ENCODE measurements at regions of chr6 and their contacts with region 1.

Region 1: DNA sequence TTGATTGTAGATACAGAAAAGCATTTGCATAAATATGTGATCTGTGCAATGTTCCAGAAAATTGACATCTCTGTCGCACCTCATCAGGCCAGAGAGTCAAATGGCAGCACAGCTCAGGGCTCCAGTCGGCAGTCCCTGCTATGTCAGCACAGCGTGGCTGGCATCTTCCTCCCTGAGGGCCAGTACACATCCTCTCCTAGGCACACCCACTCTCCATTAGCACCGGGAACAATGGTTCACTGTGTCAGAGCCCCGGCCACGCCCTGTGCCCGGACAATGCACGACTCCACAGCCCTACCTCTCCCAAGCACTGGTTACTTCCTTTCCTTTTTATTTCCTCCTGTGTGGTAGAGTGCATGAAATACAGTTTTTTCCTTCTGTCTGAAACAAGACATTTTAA is 114.9 kb downstream of the FOXC1 start:
- DNase-seq: peak in 1 of 2 donors; percentile 84
- H3K4me3 ChIP-seq: no peak overlapping the region
- H3K27ac ChIP-seq: peak overlapping the region; percentile 42 to 54
- H3K4me1 ChIP-seq: no peaks in the 10 kb centered on the region
- H3K27me3 ChIP-seq: no peaks in the 10 kb centered on the region
- CTCF ChIP-seq: no peak
- POLR2A ChIP-seq: no peak

Region 2: GRCh38 chr6:1756472-1757129 is 32.0 kb after region 1 on chr6:
- intact Hi-C with region 1: no loop called
- DNase-seq: no peak
- H3K4me3 ChIP-seq: no peak overlapping the region
- H3K27ac ChIP-seq: peak overlapping the region; percentile 21 to 23
- H3K4me1 ChIP-seq: no peaks in the 10 kb centered on the region
- H3K27me3 ChIP-seq: no peaks in the 10 kb centered on the region
- CTCF ChIP-seq: no peak
- POLR2A ChIP-seq: no peak

Region 3: DNA sequence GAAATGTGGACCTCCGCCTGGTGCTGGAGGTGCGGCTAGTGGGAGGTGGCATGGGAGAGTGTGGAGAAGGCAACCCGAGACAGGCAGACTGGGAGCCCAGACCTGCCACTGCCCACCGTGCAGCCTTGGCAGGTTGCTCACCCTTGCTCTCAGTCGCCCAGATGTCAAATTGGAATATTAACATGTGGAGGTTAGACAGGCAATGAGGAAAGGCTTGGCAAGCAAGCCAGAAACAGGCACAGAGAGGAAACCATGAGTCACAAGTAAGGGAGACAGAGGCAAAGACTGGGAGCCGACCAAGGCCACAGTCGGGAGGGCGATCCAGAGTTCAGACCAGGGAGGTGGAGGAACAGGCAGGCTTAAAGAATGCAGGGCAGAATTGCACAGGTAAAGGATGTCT is 63.3 kb after region 1 on chr6:
- intact Hi-C with region 1: no loop called
- DNase-seq: no peak
- H3K4me3 ChIP-seq: no peak overlapping the region
- H3K27ac ChIP-seq: no peak overlapping the region
- H3K4me1 ChIP-seq: no peaks in the 10 kb centered on the region
- H3K27me3 ChIP-seq: no peaks in the 10 kb centered on the region
- CTCF ChIP-seq: no peak
- POLR2A ChIP-seq: no peak

Region 4: GRCh38 chr6:2237001-2237400 is 512.4 kb after region 1 on chr6:
- intact Hi-C with region 1: loop called (anchors 5 kb)
- DNase-seq: no peak
- H3K4me3 ChIP-seq: no peak overlapping the region
- H3K27ac ChIP-seq: no peak overlapping the region
- H3K4me1 ChIP-seq: no peaks in the 10 kb centered on the region
- H3K27me3 ChIP-seq: no peaks in the 10 kb centered on the region
- CTCF ChIP-seq: no peak
- POLR2A ChIP-seq: no peak